Activated B cell treated with CpG ODN at 0.5 μM for 24 hours (primary cell): ENCODE measurements at regions of chr3 and their contacts with region 1.

Region 1: DNA sequence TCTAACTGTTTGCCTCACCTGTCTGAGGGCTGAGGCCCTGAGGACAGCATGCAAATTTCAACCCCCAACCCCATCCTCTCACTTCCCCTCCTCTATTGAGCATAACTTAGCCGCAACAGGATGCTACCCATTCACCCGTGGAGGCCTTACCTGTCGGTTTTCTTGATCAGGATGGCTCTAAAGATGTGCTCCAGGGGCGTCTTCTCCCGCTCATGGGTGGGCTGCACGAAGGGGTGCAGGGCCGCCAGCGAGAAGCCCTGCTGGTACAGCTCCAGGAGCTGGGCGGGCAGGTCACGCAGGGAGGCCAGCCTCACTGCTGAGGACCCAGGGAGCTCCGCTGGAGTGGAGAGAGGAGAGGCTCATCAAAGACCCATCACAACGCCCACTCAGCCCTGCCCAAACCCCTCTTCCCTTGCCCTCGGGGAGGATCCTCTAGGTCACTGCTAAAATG is 79.8 kb downstream of the RFTN1 start:
- DNase-seq: peak; percentile 58
- ATAC-seq: peak; percentile 63
- H3K4me3 Mint-ChIP-seq: peak overlapping the region; percentile 68
- H3K27ac Mint-ChIP-seq: peak overlapping the region; percentile 74
- H3K4me1 Mint-ChIP-seq: peaks cover 63% of the 10 kb centered on the region
- H3K27me3 Mint-ChIP-seq: no peaks in the 10 kb centered on the region
- CTCF ChIP-seq: no peak

Region 2: GRCh38 chr3:16378920-16379319 is 54.8 kb before region 1 on chr3:
- CTCF ChIA-PET with region 1: no interaction called
- POLR2A ChIA-PET with region 1: interaction called, 36 read pairs
- intact Hi-C with region 1: loop called (anchors 1 kb)
- DNase-seq: no peak
- ATAC-seq: peak; percentile 49
- H3K4me3 Mint-ChIP-seq: peak overlapping the region; percentile 51
- H3K27ac Mint-ChIP-seq: peak overlapping the region; percentile 90
- H3K4me1 Mint-ChIP-seq: peaks cover 94% of the 10 kb centered on the region
- H3K27me3 Mint-ChIP-seq: no peaks in the 10 kb centered on the region
- CTCF ChIP-seq: no peak

Region 3: DNA sequence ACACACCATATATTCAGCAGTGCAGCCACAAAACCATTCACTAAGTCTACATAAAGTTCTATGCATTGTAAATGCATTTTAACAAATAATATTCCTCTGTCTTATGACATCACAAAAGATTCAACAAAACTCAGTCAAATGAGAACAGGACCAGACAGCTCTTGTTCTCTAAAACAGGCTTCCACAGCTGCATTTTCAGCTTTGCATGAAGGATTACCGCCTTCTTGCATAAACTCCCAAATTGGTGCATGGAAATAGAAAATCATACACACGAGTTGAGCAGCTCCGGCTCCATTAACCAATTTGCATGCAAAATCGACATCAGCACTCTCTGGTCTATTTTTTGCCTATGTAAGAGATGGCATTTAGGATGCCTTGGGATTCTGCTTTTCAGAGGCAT is 13.4 kb after region 1 on chr3:
- CTCF ChIA-PET with region 1: no interaction called
- POLR2A ChIA-PET with region 1: interaction called, 5 read pairs
- intact Hi-C with region 1: loop called (anchors 2 kb)
- DNase-seq: no peak
- ATAC-seq: no peak
- H3K4me3 Mint-ChIP-seq: no peak overlapping the region
- H3K27ac Mint-ChIP-seq: no peak overlapping the region
- H3K4me1 Mint-ChIP-seq: peaks cover 58% of the 10 kb centered on the region
- H3K27me3 Mint-ChIP-seq: no peaks in the 10 kb centered on the region
- CTCF ChIP-seq: no peak

Region 4: DNA sequence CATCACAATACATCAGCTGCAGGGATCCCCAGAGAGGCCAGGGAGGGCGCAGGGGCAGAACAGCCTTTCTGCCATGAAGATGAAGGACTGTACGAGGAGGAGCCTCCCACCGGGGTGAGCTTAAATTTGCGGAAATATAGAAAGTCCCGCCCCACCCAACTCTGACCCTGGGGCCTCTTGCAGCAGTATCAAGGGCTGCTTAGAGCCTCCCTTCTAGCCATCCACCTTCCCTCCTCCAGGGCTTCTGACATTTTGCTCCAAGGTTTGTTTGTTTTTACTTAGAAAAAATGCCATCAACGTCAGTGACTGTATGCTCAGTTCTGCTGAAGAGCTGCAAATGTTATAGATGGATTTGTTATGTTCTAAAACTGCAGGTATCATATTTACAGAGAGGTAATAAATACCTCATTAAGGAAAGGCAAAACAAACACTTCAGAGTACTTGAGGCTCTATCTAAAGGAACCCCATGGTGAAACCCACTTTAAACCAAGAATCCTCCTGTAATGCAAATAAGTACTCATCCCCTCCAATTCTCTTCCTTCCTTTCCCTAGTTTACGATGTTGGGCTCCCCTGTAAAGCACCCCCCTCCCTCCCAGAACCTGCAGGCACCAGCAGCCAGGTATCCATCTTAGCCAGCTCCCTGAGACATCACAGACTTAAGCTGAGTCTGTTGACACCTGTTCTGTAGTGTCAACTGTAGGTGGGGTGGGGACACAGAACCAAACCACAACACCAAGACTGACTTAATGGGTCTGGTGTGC is 49.2 kb after region 1 on chr3:
- CTCF ChIA-PET with region 1: no interaction called
- POLR2A ChIA-PET with region 1: interaction called, 8 read pairs
- intact Hi-C with region 1: loop called (anchors 1 kb)
- DNase-seq: peak; percentile 45
- ATAC-seq: peak; percentile 94
- H3K4me3 Mint-ChIP-seq: peak overlapping the region; percentile 68
- H3K27ac Mint-ChIP-seq: peak overlapping the region; percentile 78
- H3K4me1 Mint-ChIP-seq: peaks cover 86% of the 10 kb centered on the region
- H3K27me3 Mint-ChIP-seq: no peaks in the 10 kb centered on the region
- CTCF ChIP-seq: no peak

Region 5: DNA sequence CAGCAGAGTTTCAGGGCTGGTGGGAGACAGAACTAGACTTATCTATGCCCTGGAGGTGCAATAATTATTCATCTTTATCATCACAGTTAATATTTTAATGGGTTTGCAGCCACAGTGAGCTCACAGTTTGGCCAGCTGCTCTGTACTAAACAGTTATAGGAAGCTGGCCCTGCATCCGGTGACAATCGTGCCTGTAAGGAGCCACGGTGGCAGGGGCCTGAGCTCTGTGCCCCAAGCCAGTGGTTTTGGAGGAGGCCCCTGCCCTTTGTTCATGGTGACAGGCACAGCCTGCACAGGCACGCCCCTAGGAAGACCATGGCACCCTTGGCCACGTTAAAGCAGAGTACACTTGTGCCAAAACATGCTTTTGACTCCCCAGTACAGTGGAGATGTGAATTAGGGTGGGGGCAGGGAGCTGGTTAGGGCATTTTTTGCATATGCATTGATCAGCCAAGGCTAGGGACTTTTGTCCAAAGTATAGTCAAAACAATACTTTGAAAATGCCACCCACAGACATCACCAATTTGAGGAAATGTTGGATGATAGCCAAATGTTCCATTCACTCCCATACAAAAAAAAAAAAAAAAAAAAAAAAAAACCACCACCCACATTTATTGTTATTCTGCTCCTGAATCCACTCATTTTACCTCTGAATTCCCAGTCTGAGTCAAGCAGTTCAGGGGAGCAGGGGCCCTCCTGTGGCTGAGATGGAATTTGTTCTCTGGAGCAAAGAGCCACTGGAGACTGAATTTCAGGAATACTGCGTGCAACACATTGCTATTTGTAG is 83.2 kb after region 1 on chr3:
- CTCF ChIA-PET with region 1: interaction called, 10 read pairs
- POLR2A ChIA-PET with region 1: interaction called, 144 read pairs
- intact Hi-C with region 1: loop called (anchors 1 kb)
- DNase-seq: no peak
- ATAC-seq: no peak
- H3K4me3 Mint-ChIP-seq: peak overlapping the region; percentile 97
- H3K27ac Mint-ChIP-seq: peak overlapping the region; percentile 77
- H3K4me1 Mint-ChIP-seq: peaks cover 87% of the 10 kb centered on the region
- H3K27me3 Mint-ChIP-seq: no peaks in the 10 kb centered on the region
- CTCF ChIP-seq: no peak

Region 6: DNA sequence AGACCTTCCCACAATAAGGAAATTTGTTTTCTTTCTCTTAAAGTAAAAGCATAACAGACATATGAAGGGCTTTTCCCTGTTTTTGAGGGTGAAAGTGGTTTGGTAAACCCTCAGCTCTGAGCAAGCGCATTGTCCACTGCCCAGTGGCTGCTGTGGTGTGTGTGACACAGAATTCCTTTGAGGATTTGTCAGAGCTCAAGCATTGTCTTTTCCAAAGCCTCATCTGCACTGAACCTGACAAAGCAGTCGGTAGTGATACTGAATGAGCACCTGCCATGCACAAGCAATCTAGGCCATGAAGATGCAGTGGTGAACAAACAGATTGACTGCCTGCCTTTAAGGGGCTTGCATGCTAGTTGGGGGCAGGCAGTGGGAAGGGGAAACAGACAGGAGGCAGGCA is 579.3 kb after region 1 on chr3:
- CTCF ChIA-PET with region 1: no interaction called
- POLR2A ChIA-PET with region 1: no interaction called
- intact Hi-C with region 1: no loop called
- DNase-seq: no peak
- ATAC-seq: no peak
- H3K4me3 Mint-ChIP-seq: no peak overlapping the region
- H3K27ac Mint-ChIP-seq: no peak overlapping the region
- H3K4me1 Mint-ChIP-seq: peaks cover 13% of the 10 kb centered on the region
- H3K27me3 Mint-ChIP-seq: no peaks in the 10 kb centered on the region
- CTCF ChIP-seq: no peak

Region 7: DNA sequence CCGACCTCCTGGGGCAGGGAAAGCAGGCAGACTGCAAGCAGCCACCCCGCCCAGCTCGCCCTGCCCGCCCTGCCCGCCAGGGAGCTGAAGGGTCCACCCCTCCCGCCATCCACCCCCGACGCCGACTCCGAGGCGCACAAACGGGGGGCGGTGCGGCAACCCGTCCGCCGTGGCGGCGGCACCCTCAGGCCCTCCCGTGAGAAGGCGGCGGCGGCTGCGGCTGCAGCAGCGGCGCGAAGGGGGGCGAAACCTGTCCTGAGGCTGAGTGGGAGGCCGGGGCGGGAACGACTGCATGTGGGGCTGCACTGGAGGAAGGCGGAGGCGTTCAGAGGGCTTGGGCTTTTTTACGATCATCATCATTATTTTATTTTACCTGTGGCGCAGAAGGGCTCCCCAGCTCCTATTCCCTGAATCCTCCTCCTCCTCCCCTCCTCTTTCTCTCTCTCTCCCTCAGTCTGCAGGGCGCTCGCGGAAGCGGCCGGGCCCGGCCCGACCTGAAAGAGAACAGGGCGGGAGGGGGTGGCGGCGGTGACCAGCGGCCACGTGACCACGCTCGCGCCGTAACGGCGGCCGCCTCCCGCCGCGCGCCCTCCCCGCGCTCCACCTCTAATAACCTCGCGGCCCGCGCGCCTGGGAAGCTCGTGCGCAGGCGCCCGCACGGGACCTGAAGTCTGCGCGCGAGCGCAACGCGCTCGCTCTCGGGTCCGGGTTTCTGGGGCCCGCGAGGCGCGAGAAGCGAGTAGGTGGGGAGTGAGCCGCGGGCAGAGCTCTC is 1308.6 kb after region 1 on chr3 and contains the start of gene TBC1D5:
- CTCF ChIA-PET with region 1: no interaction called
- POLR2A ChIA-PET with region 1: no interaction called
- intact Hi-C with region 1: loop called (anchors 2 kb)
- DNase-seq: peak; percentile 91
- ATAC-seq: peak; percentile 83
- H3K4me3 Mint-ChIP-seq: peak within 1 kb of the TSS; percentile 96
- H3K27ac Mint-ChIP-seq: peak within 1 kb of the TSS; percentile 97
- H3K4me1 Mint-ChIP-seq: peaks cover 57% of the 10 kb centered on the region
- H3K27me3 Mint-ChIP-seq: no peaks in the 10 kb centered on the region
- CTCF ChIP-seq: no peak
- total RNA-seq, gene TBC1D5: 102 and 106 TPM in 2 replicates